ENCODE measurements at regions of chr4 and their contacts with region 1.

Region 1: GRCh38 chr4:80125252-80126177 is 52.5 kb upstream of the ANTXR2 start:
- DNase-seq: peak; percentile 31
- H3K4me3 Mint-ChIP-seq: peak overlapping the region; percentile 28
- H3K27ac Mint-ChIP-seq: peak overlapping the region; percentile 70
- H3K4me1 Mint-ChIP-seq: peaks cover 49% of the 10 kb centered on the region
- H3K27me3 Mint-ChIP-seq: no peaks in the 10 kb centered on the region

Region 2: GRCh38 chr4:80101792-80102116 is 23.8 kb before region 1 on chr4:
- CTCF ChIA-PET with region 1: no interaction called
- POLR2A ChIA-PET with region 1: no interaction called
- intact Hi-C with region 1: loop called (anchors 2 kb)
- DNase-seq: no peak
- H3K4me3 Mint-ChIP-seq: no peak overlapping the region
- H3K27ac Mint-ChIP-seq: no peak overlapping the region
- H3K4me1 Mint-ChIP-seq: peaks cover 9% of the 10 kb centered on the region
- H3K27me3 Mint-ChIP-seq: peaks cover 3% of the 10 kb centered on the region

Region 3: GRCh38 chr4:80153874-80154544 is 28.5 kb after region 1 on chr4:
- CTCF ChIA-PET with region 1: interaction called, 9 read pairs
- POLR2A ChIA-PET with region 1: no interaction called
- intact Hi-C with region 1: loop called (anchors 1 kb)
- DNase-seq: no peak
- H3K4me3 Mint-ChIP-seq: peak overlapping the region; percentile 6
- H3K27ac Mint-ChIP-seq: peak overlapping the region; percentile 52
- H3K4me1 Mint-ChIP-seq: peaks cover 20% of the 10 kb centered on the region
- H3K27me3 Mint-ChIP-seq: no peaks in the 10 kb centered on the region

Region 4: GRCh38 chr4:80202190-80202711 is 76.7 kb after region 1 on chr4:
- CTCF ChIA-PET with region 1: interaction called, 16 read pairs
- POLR2A ChIA-PET with region 1: no interaction called
- intact Hi-C with region 1: no loop called
- DNase-seq: peak; percentile 86
- H3K4me3 Mint-ChIP-seq: peak overlapping the region; percentile 73
- H3K27ac Mint-ChIP-seq: peak overlapping the region; percentile 78
- H3K4me1 Mint-ChIP-seq: peaks cover 22% of the 10 kb centered on the region
- H3K27me3 Mint-ChIP-seq: peaks cover 6% of the 10 kb centered on the region

Region 5: DNA sequence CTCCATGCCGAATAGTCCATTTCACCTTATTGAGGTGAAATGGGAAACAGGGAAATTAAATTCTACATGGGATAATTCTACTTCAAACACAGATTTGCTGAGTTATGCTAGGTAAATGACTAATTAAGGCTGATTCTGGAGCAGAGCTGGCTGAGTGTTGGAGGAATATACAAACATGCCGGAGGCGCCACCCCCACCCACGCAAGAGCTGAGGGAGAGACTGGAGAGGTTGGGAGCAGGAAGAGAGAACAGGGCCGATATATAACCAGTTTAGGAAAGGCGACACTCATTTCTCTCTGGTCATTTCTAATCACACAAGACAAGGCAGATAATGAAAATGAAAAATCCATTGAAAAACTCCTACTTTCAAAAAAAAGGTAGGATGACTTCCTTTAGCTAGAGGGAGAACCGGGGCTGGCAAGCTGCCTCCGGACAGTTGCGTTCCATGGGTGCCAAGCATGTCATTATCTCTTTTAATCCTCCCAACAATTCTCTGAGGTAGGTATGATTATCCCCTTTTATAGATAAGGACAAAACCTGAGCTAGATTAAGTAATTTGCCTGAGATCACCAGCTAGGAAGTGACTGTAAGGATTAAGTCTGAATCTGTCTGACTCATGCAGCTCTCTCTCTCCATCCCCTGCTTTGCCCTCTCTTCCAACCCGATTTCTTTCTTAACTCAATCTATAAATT is 182.4 kb after region 1 on chr4:
- CTCF ChIA-PET with region 1: no interaction called
- POLR2A ChIA-PET with region 1: no interaction called
- intact Hi-C with region 1: no loop called
- DNase-seq: no peak
- H3K4me3 Mint-ChIP-seq: no peak overlapping the region
- H3K27ac Mint-ChIP-seq: no peak overlapping the region
- H3K4me1 Mint-ChIP-seq: no peaks in the 10 kb centered on the region
- H3K27me3 Mint-ChIP-seq: peaks cover 11% of the 10 kb centered on the region